Esophagus squamous epithelium (tissue), 5 donors: ENCODE measurements at regions of chr3 and their contacts with region 1.

Region 1: DNA sequence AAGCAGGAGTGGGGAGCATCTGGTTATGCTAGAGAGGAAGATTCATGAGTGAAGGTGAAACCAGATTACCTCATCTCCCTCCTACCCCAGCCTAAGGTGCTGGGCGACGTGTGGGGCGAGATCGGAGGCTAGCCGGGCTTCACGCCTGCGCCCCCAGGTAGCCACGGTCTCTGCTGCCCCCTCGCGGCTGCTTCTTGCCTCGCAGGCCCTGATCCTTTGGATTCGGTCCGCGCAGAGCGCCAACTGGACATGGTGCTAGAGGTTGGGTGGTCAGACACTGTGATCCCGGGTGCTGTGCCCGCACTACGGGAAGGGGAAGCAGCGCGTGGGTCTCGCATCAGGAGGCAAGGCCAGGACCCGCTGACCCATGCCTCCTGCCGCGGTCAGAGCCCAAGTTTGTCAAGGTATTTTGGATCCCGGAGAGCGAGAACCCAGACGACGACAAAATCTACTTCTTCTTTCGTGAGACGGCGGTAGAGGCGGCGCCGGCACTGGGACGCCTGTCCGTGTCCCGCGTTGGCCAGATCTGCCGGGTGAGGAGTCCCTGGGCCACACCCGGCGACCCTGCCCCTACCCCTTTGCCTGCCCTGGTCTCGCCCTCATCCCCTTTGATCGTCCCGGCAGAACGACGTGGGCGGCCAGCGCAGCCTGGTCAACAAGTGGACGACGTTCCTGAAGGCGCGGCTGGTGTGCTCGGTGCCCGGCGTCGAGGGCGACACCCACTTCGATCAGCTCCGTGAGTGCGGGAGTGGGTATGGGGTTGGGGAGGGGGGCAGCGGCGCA is 4.2 kb downstream of the SEMA3B start:
- DNase-seq: no peak
- H3K4me3 ChIP-seq: peak overlapping the region; percentile 18 to 63 (median 40)
- H3K27ac ChIP-seq: peak overlapping the region in 2 of 4 donors; percentile 43 to 49
- H3K4me1 ChIP-seq: peaks cover 22 to 74% (median 48%) of the 10 kb centered on the region in 3 donors
- H3K27me3 ChIP-seq: peaks cover 0 to 40% (median 3%) of the 10 kb centered on the region in 4 donors
- CTCF ChIP-seq: peak; percentile 97 to 100 (median 99)
- POLR2A ChIP-seq: no peak

Region 2: GRCh38 chr3:50227390-50228183 is 45.5 kb before region 1 on chr3:
- intact Hi-C with region 1: loop called (anchors 2 kb)
- DNase-seq: peak; percentile 79
- H3K4me3 ChIP-seq: peak overlapping the region; percentile 45 to 76 (median 66)
- H3K27ac ChIP-seq: peak overlapping the region; percentile 86 to 95 (median 90)
- H3K4me1 ChIP-seq: peaks cover 24 to 53% (median 30%) of the 10 kb centered on the region in 3 donors
- H3K27me3 ChIP-seq: peaks cover 0 to 5% (median 0%) of the 10 kb centered on the region in 4 donors
- CTCF ChIP-seq: peak; percentile 79 to 97 (median 95)
- POLR2A ChIP-seq: peak in 2 of 4 donors; percentile 26 to 51

Region 3: GRCh38 chr3:50237754-50238548 is 35.2 kb before region 1 on chr3:
- intact Hi-C with region 1: no loop called
- DNase-seq: peak; percentile 65
- H3K4me3 ChIP-seq: peak overlapping the region; percentile 74 to 96 (median 88)
- H3K27ac ChIP-seq: peak overlapping the region; percentile 90 to 98 (median 96)
- H3K4me1 ChIP-seq: peaks cover 54 to 82% (median 57%) of the 10 kb centered on the region in 3 donors
- H3K27me3 ChIP-seq: no peaks in the 10 kb centered on the region
- CTCF ChIP-seq: no peak
- POLR2A ChIP-seq: peak in 3 of 4 donors; percentile 57 to 81 (median 67)

Region 4: DNA sequence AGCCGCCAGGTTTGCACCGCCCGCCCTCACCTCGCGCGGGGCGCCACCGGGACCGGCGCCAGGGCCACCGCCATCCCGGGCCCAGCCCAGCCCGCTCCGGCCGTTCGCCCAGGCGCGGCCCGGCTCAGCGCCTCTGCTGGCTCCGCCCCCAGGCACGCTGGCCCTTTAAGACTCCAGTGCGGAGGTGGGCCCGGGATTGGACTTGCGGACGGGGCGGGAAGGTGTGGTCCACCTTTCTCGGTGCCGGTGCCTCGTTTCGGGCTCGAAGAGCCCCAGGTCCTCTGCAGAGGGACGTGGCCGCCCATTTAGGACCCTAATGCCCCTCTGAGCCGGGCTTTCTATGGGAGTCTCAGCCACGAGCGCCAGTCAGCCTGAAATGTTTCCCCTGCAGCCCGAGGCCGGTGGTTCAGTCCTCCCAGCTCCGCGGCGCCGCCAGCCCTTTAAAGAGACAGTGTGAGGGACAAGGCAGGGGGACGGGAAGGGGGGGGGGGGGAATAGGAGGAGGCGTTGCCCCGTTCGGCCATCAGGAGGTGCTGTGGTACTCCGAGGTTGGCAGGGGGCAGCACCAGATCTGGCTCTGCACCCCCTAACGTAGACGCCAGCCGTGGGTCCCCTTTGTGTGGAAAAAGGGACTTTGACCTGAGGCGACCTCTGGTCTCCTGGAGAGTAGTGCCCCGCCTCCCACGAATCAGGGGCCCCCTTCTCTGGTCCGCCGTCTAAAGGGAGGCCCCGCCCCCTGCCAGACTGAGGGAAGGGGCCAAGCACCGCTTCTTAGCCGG is 48.4 kb after region 1 on chr3:
- intact Hi-C with region 1: loop called (anchors 10 kb)
- DNase-seq: peak; percentile 67
- H3K4me3 ChIP-seq: peak overlapping the region; percentile 71 to 98 (median 82)
- H3K27ac ChIP-seq: peak overlapping the region; percentile 90 to 98 (median 96)
- H3K4me1 ChIP-seq: peaks cover 60 to 93% (median 60%) of the 10 kb centered on the region in 3 donors
- H3K27me3 ChIP-seq: no peaks in the 10 kb centered on the region
- CTCF ChIP-seq: peak; percentile 20 to 53 (median 28)
- POLR2A ChIP-seq: peak in 2 of 4 donors; percentile 50 to 61